ENCODE measurements at regions of chr3 and their contacts with region 1.

Region 1: DNA sequence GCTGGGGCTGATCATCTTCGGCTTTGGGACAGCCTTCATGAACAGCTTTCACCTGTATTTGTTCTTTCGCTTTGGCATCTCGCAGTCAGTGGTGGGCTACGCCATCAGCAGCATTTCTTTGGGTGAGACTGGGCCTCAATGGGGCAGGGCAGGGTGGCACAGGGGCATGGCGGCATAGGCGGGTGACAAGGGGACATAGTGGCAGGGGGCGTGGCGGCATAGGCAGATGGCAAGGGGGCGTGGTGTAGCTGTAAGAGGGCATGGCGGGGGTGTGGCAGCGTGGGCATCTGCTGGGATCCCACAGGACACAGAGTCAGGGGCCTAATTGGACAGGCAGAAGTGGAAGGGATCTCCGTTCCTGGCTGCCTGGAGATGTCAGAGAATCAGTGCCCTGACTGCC is 25.5 kb downstream of the SLC22A14 start:
- DNase-seq: no peak
- H3K4me3 ChIP-seq: no peak overlapping the region
- CTCF ChIP-seq: no peak

Region 2: GRCh38 chr3:38368238-38368637 is 60.6 kb after region 1 on chr3:
- in situ Hi-C with region 1: loop called (anchors 5 kb)
- DNase-seq: no peak
- H3K4me3 ChIP-seq: no peak overlapping the region
- CTCF ChIP-seq: no peak